Breast epithelium (tissue), 4 donors: ENCODE measurements at regions of chr6 and their contacts with region 1.

Region 1: DNA sequence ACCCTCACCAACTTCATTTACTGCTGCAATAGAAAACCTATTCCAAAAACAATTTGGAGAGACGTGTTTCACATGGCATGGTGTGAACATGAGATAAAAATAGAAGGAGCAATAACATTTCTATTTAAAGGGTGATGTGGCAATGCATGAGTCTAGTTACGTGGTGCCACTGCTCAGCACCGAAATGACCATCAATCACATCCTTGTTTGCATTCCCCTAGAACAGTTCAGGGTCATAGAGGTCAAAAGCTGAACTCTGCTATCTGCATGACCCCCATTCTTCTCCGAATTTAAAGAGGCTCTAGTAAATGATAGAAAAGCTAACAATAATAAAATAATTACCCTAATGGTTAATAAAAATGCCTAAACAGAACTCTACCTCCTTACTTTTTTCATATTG is 29.5 kb downstream of the ROS1 start:
- DNase-seq: no peak
- H3K4me3 ChIP-seq: no peak overlapping the region
- H3K27ac ChIP-seq: no peak overlapping the region
- H3K4me1 ChIP-seq: no peaks in the 10 kb centered on the region
- H3K27me3 ChIP-seq: peaks cover 0 to 5% of the 10 kb centered on the region in 2 donors
- CTCF ChIP-seq: no peak
- POLR2A ChIP-seq: no peak

Region 2: GRCh38 chr6:117157448-117157847 is 238.8 kb before region 1 on chr6:
- intact Hi-C with region 1: no loop called
- DNase-seq: no peak
- H3K4me3 ChIP-seq: no peak overlapping the region
- H3K27ac ChIP-seq: no peak overlapping the region
- H3K4me1 ChIP-seq: no peaks in the 10 kb centered on the region
- H3K27me3 ChIP-seq: no peaks in the 10 kb centered on the region
- CTCF ChIP-seq: no peak
- POLR2A ChIP-seq: no peak

Region 3: GRCh38 chr6:117298941-117299340 is 97.3 kb before region 1 on chr6:
- intact Hi-C with region 1: no loop called
- DNase-seq: no peak
- H3K4me3 ChIP-seq: no peak overlapping the region
- H3K27ac ChIP-seq: no peak overlapping the region
- H3K4me1 ChIP-seq: no peaks in the 10 kb centered on the region
- H3K27me3 ChIP-seq: no peaks in the 10 kb centered on the region
- CTCF ChIP-seq: no peak
- POLR2A ChIP-seq: no peak

Region 4: DNA sequence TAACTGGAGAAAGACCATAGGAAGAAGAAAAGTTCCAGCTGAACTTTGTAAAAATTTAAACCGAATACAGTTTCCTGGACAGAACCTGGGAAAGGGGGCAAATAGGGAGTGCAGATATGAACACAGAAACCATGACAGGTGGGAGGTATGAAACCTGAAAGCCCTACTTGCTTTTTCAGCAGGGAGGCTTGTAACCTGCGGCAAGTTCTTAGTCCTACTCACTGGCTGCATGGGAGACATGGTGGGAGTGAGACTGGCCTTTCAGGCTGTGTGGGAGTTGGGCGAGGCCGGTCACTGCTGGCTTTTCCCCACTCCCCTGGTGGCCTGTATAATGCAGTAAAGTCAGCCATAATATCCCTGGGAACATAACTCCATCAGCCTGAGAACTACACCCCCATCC is 24.7 kb before region 1 on chr6:
- intact Hi-C with region 1: loop called (anchors 1 kb)
- DNase-seq: no peak
- H3K4me3 ChIP-seq: no peak overlapping the region
- H3K27ac ChIP-seq: no peak overlapping the region
- H3K4me1 ChIP-seq: no peaks in the 10 kb centered on the region
- H3K27me3 ChIP-seq: no peaks in the 10 kb centered on the region
- CTCF ChIP-seq: no peak
- POLR2A ChIP-seq: no peak

Region 5: GRCh38 chr6:117711369-117711768 is 315.1 kb after region 1 on chr6:
- intact Hi-C with region 1: no loop called
- DNase-seq: no peak
- H3K4me3 ChIP-seq: no peak overlapping the region
- H3K27ac ChIP-seq: no peak overlapping the region
- H3K4me1 ChIP-seq: no peaks in the 10 kb centered on the region
- H3K27me3 ChIP-seq: no peaks in the 10 kb centered on the region
- CTCF ChIP-seq: no peak
- POLR2A ChIP-seq: no peak